ENCODE measurements at regions of chr12 and their contacts with region 1.

Region 1: GRCh38 chr12:57583008-57583831 is 7.8 kb upstream of the PIP4K2C start:
- DNase-seq: peak in 1 of 3 donors; percentile 63
- ATAC-seq: peak; percentile 88 to 93 (median 90)
- H3K4me3 ChIP-seq: no peak overlapping the region
- H3K27ac ChIP-seq: no peak overlapping the region
- H3K4me1 ChIP-seq: peaks cover 0 to 13% (median 2%) of the 10 kb centered on the region in 4 donors
- H3K27me3 ChIP-seq: no peaks in the 10 kb centered on the region
- CTCF ChIP-seq: peak; percentile 90 to 95 (median 92)
- POLR2A ChIP-seq: no peak

Region 2: GRCh38 chr12:57621497-57622292 is 38.5 kb after region 1 on chr12:
- intact Hi-C with region 1: loop called (anchors 5 kb)
- DNase-seq: peak in 2 of 3 donors; percentile 63 to 71
- ATAC-seq: peak; percentile 77 to 86 (median 82)
- H3K4me3 ChIP-seq: peak overlapping the region; percentile 28 to 43 (median 33)
- H3K27ac ChIP-seq: no peak overlapping the region
- H3K4me1 ChIP-seq: peaks cover 0 to 13% (median 6%) of the 10 kb centered on the region in 4 donors
- H3K27me3 ChIP-seq: peaks cover 0 to 39% of the 10 kb centered on the region in 2 donors
- CTCF ChIP-seq: peak; percentile 83 to 97 (median 88)
- POLR2A ChIP-seq: no peak

Measured in right lobe of liver (tissue), 6 donors.